ENCODE measurements at regions of chr3 and their contacts with region 1.

Region 1: DNA sequence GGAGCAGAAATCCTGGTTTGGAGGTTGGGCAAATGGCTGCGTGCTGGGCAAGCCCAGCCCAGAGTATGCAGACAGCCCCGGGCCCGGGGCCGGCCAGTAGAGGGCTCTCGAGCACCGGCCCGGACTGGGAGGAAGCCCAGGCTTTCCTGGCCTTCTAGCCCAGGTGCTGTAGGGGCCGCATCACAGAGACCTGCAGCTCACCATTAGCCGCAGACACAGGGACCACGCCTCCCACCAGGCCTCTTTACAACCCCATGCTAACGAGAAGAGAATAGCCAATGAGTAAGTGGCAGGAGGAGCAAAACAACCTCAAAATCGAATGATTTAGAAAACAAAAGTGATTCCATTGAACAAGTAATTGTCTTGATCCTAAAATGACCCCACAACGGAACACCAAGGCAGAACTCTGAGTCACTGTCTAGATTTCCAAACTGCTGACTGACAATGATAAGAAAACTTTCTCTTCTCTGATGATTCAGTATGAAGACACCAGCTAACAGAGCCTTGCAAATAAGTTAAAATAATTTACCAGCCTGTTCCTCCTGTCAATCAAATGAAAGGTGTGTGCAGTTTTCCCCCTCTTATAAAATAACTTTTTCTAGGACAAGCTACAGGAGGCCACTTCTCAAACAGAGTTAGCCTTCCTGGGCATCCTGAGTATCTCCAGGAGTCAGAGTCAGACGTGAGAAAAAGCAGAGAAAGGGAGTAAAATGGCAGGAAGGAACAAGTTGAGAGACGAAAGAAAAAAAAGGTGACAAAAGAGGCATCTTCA is 102.2 kb downstream of the DGKG start:
- DNase-seq: peak; percentile 37 to 72 (median 50)
- H3K4me3 ChIP-seq: no peak overlapping the region
- H3K4me3 Mint-ChIP-seq: peak overlapping the region in 3 of 7 donors; percentile 30 to 56 (median 44)
- H3K27ac ChIP-seq: no peak overlapping the region
- H3K27ac Mint-ChIP-seq: peak overlapping the region in 4 of 8 donors; percentile 25 to 84 (median 56)
- H3K4me1 ChIP-seq: peaks cover 4% of the 10 kb centered on the region
- H3K4me1 Mint-ChIP-seq: peaks cover 8 to 13% (median 11%) of the 10 kb centered on the region in 3 donors
- H3K27me3 ChIP-seq: no peaks in the 10 kb centered on the region
- H3K27me3 Mint-ChIP-seq: peaks cover 2 to 4% of the 10 kb centered on the region in 2 donors

Region 2: DNA sequence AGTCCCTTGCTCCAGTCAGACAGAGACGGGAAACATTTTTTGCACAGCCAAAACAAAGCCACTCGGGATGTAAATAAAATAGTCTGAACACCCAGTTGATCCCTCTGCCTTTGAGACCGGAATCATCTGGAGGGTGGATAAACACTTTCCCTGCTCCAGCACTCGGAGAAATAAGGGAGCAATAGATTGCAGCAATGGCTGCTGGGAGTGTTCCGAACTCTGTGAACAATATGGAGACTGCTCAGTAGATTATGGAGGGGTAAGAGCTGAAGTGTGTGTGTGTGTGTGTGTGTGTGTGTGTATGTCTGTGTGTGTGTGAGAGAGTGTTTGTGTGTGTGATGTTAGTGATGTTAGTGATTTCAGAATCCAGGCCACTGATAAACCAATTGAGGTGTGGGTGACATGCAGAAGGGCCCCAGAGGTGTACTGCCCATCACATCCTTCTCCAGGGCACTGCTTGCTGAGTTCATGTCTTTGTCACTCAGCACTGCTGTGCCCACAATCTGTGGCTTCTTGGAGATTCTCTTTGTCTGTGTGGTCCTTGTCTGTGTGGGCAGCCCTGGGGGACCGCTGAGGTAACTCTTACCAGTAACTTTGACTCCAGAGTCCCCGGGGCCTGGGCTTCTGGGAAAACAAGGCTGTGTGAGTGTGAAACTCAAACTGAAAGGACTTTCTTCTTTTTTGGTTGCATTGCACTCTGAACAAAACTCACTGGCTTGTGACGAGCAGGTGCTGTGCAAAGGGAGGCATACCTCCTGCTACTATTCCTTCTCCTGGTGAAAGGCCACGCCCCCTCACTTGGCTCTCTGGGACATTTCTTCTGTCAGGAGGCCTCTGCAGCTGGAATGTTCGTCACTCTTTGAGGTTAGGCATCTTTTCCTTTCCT is 261.4 kb after region 1 on chr3:
- CTCF ChIA-PET with region 1: interaction called, 10 read pairs
- POLR2A ChIA-PET with region 1: no interaction called
- DNase-seq: no peak
- H3K4me3 ChIP-seq: no peak overlapping the region
- H3K4me3 Mint-ChIP-seq: peak overlapping the region in 1 of 7 donors; percentile 2
- H3K27ac ChIP-seq: no peak overlapping the region
- H3K27ac Mint-ChIP-seq: peak overlapping the region in 5 of 8 donors; percentile 6 to 73 (median 48)
- H3K4me1 ChIP-seq: peaks cover 45% of the 10 kb centered on the region
- H3K4me1 Mint-ChIP-seq: peaks cover 51 to 58% (median 57%) of the 10 kb centered on the region in 3 donors
- H3K27me3 ChIP-seq: no peaks in the 10 kb centered on the region
- H3K27me3 Mint-ChIP-seq: no peaks in the 10 kb centered on the region

Region 3: DNA sequence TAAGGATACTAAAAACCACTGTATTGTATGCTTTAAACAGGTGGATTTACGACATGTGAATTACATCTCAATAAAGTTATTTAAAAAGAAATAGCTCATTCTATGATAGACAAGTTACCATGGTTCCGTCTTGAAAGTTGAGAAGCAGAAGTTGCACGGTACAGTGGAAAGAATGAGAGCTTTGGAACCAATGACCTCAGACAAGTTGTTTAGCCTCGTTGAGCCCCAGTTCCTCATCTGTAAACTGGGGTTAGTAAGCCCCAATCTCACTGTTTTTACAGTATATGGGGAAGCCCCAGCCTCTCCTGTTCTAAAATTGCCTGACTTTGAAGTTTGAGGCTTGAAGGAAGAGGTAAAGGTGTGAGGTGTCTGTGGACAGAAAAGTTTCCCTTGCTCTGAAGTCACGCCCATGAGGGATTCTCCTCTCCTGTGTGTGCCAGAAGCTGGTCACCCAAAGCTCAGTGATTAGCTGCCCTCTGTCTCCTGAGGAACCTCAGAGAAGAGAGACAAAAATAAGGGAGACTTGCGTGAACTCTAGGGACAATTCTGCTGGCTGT is 274.4 kb after region 1 on chr3:
- CTCF ChIA-PET with region 1: interaction called, 82 read pairs
- POLR2A ChIA-PET with region 1: no interaction called
- DNase-seq: peak in 4 of 5 donors; percentile 15 to 56 (median 41)
- H3K4me3 ChIP-seq: no peak overlapping the region
- H3K4me3 Mint-ChIP-seq: peak overlapping the region in 5 of 7 donors; percentile 1 to 67 (median 34)
- H3K27ac ChIP-seq: no peak overlapping the region
- H3K27ac Mint-ChIP-seq: peak overlapping the region in 7 of 8 donors; percentile 28 to 86 (median 75)
- H3K4me1 ChIP-seq: peaks cover 24% of the 10 kb centered on the region
- H3K4me1 Mint-ChIP-seq: peaks cover 19 to 51% (median 32%) of the 10 kb centered on the region in 3 donors
- H3K27me3 ChIP-seq: no peaks in the 10 kb centered on the region
- H3K27me3 Mint-ChIP-seq: no peaks in the 10 kb centered on the region